Ascending aorta (tissue), 2 donors: ENCODE measurements at regions of chr15 and their contacts with region 1.

Region 1: DNA sequence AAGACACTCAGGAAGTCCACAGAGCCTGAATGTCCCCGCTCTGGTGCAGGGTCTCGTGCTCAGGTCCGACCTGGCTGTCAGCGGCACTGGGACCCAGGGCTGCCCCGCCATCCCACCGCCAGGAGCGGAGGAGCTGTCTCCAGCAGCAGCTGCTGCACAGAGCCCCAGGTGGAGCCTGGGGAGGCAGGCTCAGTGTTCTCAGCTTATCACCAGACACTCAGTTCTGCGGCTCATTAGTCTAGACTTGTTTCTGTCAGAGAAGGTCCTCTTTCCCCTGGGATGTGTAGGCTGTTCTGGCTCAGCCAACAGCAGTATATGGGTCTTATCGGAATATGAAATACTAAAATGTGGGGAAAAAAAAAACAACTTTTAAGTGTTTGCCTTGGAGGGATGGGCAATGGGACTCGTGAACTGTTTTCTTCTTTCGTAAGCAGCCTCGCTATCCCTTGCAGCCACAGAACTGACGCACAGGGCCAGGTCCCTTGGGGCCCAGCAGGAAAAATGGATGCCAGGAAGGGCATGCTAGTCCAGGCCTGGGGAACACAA is 75.9 kb downstream of the KLF13 start:
- DNase-seq: peak in 1 of 2 donors; percentile 93
- H3K4me3 ChIP-seq: peak overlapping the region in 1 of 2 donors; percentile 20
- H3K27ac ChIP-seq: peak overlapping the region; percentile 89 to 90
- H3K4me1 ChIP-seq: peaks cover 7 to 17% of the 10 kb centered on the region in 2 donors
- H3K27me3 ChIP-seq: no peaks in the 10 kb centered on the region
- CTCF ChIP-seq: no peak

Region 2: DNA sequence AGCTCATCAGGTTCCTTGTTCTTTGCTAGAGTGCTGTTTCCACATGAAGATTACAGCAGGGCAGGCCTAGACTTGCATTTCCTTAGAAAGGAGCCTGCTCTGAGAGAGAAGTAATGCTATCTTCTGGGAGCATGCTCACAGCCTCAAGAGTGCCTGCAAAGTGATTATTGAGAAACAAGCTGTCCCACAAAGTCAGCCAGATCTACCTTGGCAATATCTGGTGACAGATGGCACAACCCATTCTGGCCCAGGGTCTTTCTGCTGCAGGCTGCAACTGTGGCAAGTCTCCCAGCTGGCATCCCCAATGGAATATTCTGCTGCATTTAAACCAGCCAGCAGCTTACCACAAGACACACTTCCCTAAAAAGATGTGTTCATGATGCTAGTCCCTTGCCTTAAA is 440.5 kb before region 1 on chr15:
- intact Hi-C with region 1: no loop called
- DNase-seq: no peak
- H3K4me3 ChIP-seq: no peak overlapping the region
- H3K27ac ChIP-seq: no peak overlapping the region
- H3K4me1 ChIP-seq: no peaks in the 10 kb centered on the region
- H3K27me3 ChIP-seq: no peaks in the 10 kb centered on the region
- CTCF ChIP-seq: no peak

Region 3: GRCh38 chr15:31365655-31366127 is 36.9 kb before region 1 on chr15:
- intact Hi-C with region 1: loop called (anchors 2 kb)
- DNase-seq: peak; percentile 88 to 98
- H3K4me3 ChIP-seq: peak overlapping the region; percentile 18 to 58
- H3K27ac ChIP-seq: peak overlapping the region; percentile 74 to 79
- H3K4me1 ChIP-seq: peaks cover 15 to 38% of the 10 kb centered on the region in 2 donors
- H3K27me3 ChIP-seq: no peaks in the 10 kb centered on the region
- CTCF ChIP-seq: peak; percentile 20 to 63 (median 52)

Region 4: GRCh38 chr15:31387479-31388118 is 15.0 kb before region 1 on chr15:
- intact Hi-C with region 1: no loop called
- DNase-seq: peak in 1 of 2 donors; percentile 73
- H3K4me3 ChIP-seq: no peak overlapping the region
- H3K27ac ChIP-seq: peak overlapping the region; percentile 46 to 74
- H3K4me1 ChIP-seq: peaks cover 2 to 13% of the 10 kb centered on the region in 2 donors
- H3K27me3 ChIP-seq: no peaks in the 10 kb centered on the region
- CTCF ChIP-seq: no peak

Region 5: GRCh38 chr15:31442203-31443111 is 39.9 kb after region 1 on chr15:
- intact Hi-C with region 1: loop called (anchors 2 kb)
- DNase-seq: no peak
- H3K4me3 ChIP-seq: no peak overlapping the region
- H3K27ac ChIP-seq: peak overlapping the region; percentile 49 to 70
- H3K4me1 ChIP-seq: peaks cover 7 to 24% of the 10 kb centered on the region in 2 donors
- H3K27me3 ChIP-seq: no peaks in the 10 kb centered on the region
- CTCF ChIP-seq: peak in 2 of 3 experiments; percentile 5 to 10

Region 6: DNA sequence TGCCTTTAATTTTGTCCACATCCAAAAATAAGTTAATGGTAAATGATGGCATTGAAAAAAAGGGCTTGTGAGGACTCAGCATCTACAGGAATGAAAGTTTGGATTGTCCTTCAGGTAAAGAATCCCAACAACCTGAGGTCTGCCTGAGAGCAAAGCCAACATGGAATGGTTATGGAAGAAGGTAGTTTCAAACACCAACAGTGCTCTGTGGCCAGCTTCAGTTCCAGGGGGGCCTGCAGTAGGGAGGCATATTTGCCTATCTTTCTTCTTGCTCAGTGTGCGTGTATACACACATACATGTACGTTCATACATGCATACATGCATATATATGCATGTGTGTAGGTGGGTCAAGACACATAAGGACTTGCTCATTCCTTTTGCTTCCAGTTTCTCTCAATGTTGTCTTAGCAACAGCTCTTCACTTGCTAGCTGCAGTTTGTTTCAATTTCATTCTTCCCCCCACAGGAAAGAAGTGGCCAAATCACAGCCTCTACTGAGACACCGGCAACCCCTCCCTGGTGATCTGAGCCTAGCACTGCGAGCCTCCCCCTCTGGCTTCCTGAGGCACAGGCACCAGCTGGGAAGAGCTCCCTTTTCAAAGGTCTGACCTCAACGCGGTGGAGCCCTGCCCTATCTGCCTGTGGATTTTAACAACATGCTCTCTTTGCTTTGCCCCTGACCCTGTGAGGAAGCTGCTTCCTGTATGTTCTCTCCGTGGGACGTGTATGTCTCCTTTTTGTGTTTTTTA is 70.2 kb after region 1 on chr15:
- intact Hi-C with region 1: loop called (anchors 5 kb)
- DNase-seq: peak in 1 of 2 donors; percentile 66
- H3K4me3 ChIP-seq: no peak overlapping the region
- H3K27ac ChIP-seq: peak overlapping the region; percentile 24 to 49
- H3K4me1 ChIP-seq: peaks cover 7 to 17% of the 10 kb centered on the region in 2 donors
- H3K27me3 ChIP-seq: no peaks in the 10 kb centered on the region
- CTCF ChIP-seq: no peak